ENCODE measurements at regions of chr1 and their contacts with region 1.

Region 1: DNA sequence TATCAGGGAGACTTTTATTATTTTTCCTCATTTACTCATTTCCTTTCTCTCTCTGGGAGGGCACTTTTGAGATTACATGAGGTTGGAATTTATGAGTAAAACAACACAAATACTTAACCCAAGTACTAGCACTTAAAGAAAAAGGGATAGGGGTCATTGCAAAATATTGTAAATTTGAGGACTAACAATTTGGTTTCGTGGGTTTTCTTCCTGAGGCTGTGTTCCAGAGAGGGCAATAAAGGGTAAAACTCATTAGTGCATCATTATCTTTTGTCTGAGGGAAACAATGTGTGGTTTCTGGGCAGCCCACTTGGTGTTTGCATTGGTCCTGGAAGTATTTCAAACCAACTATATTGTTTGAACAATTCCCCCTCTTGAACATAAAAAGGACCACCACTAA is 96.5 kb downstream of the GREM2 start:
- DNase-seq: peak; percentile 27
- ATAC-seq: peak; percentile 57
- H3K4me3 ChIP-seq: no peak overlapping the region
- H3K27ac ChIP-seq: no peak overlapping the region
- H3K4me1 ChIP-seq: no peaks in the 10 kb centered on the region
- H3K27me3 ChIP-seq: peaks cover 45% of the 10 kb centered on the region
- CTCF ChIP-seq: no peak

Region 2: DNA sequence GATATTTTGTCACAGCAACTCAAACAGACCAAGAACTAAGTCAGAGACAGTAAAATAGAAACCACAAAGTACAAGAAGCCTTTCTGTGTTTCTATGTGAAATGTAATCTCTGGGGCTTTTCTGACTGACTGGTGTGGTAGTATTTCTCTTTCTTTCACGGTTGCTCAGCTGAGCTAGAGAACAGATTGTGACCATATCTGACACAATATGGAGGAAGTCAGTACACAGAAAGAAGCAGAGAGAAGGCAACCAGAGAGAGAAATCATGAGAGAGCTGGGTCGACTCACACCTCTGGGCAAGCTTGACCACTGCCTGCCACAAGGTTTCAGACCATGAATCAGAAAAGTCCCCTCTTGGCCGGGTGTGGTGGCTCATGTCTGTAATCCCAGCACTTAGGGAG is 305.3 kb after region 1 on chr1:
- CTCF ChIA-PET with region 1: no interaction called
- POLR2A ChIA-PET with region 1: no interaction called
- intact Hi-C with region 1: loop called (anchors 10 kb)
- DNase-seq: no peak
- ATAC-seq: no peak
- H3K4me3 ChIP-seq: no peak overlapping the region
- H3K27ac ChIP-seq: no peak overlapping the region
- H3K4me1 ChIP-seq: peaks cover 9% of the 10 kb centered on the region; the same call in 1 of the 2 replicates
- H3K27me3 ChIP-seq: no peaks in the 10 kb centered on the region
- CTCF ChIP-seq: no peak